OCI-LY7 (cell line): ENCODE measurements at regions of chr12 and their contacts with region 1.

Region 1: GRCh38 chr12:47346251-47347019 is 266.7 kb upstream of the AMIGO2 start:
- DNase-seq: no peak
- H3K4me3 ChIP-seq: no peak overlapping the region
- H3K27ac ChIP-seq: no peak overlapping the region
- H3K4me1 ChIP-seq: peaks cover 7% of the 10 kb centered on the region
- CTCF ChIP-seq: no peak

Region 2: DNA sequence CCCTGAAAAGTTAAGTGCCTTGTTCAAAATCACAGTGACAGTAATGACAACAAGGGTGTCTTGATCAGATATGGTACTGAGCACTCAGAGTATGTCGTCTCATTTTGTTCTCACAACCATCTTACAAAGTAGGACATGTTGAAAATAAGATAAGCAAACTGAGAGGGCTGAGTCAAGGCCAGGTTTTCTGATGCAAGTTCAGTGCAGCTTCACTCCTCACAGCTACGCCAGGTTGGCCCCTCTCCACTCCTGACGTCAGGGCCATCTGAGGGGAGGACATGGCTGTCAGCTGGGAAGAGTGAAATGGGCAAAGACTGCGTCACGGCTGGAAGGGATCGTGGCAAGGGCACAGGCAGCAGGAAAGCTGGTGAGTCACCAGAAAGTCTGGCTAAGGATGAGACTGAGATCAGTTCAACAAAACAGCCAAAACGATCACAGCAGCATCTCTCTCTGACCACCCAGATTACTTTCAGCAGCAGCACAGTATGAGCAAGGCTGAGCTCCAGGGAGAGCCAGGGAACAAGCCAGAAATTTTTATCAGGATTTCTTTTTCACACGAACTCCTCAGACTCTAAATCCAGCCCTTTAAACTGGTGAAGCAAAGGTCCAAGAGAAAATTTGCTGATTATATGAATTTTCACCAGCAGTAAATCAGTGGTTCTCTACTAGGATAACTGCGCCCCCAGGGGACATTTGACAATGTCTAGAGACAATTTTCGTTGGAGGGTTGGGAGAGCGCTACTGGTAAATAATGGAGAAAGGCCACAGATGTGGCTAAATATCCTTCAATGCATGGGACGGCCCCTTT is 31.2 kb after region 1 on chr12:
- CTCF ChIA-PET with region 1: no interaction called
- POLR2A ChIA-PET with region 1: no interaction called
- intact Hi-C with region 1: loop called (anchors 1 kb)
- DNase-seq: no peak
- H3K4me3 ChIP-seq: no peak overlapping the region
- H3K27ac ChIP-seq: no peak overlapping the region
- H3K4me1 ChIP-seq: peaks cover 1% of the 10 kb centered on the region
- CTCF ChIP-seq: no peak